ENCODE measurements at regions of chr14 and their contacts with region 1.

Region 1: DNA sequence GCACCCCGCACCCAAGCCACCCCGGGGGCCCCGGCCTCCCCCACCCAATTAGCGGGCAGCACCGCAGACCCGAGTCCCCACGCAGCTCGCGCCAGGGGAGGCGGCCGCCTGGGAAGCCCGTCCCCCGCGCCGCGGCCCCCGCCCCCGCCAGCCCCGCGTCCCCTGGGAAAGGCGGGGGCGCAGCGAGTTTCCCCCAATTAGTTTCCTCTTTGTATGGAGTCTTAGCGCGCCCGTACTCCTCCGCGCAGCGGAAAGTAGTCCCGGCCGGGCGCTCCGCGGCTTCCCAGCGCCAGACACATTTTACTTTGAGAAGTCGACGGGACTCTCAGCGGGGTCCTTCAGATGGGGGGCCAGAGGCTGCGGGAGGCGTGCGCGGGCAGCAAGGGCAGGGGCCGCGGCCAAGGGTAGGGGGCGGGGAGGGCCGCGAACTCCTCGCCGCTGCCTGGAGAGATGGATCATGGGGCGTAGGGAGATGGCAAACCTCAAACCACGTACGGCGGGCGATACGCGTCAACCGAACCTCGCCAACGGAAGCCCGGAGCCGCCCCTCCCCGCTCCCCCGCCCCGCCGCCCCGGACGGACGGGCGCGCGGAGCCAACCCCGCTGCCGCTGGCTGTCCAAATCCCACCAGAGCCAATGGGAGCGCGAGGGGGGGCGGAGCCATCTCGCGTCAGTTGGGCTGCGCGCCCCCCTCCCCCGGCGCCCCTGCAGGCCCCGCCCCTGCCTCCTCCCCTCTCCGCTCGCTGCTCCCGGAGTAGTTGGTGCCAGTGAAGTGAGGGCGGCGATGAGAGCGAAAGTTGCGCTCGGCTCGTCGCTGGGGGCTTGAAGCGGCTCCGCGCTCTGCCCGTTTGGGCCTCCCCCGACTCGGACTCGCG is at the start of gene RCOR1:
- DNase-seq: peak; percentile 99
- ATAC-seq: peak; percentile 92
- H3K4me3 Mint-ChIP-seq: peak within 1 kb of the TSS; percentile 93
- H3K27ac Mint-ChIP-seq: peak within 1 kb of the TSS; percentile 92
- H3K4me1 Mint-ChIP-seq: peaks cover 33% of the 10 kb centered on the region
- H3K27me3 Mint-ChIP-seq: no peaks in the 10 kb centered on the region
- total RNA-seq, gene RCOR1: 14.8 to 15.3 TPM

Region 2: DNA sequence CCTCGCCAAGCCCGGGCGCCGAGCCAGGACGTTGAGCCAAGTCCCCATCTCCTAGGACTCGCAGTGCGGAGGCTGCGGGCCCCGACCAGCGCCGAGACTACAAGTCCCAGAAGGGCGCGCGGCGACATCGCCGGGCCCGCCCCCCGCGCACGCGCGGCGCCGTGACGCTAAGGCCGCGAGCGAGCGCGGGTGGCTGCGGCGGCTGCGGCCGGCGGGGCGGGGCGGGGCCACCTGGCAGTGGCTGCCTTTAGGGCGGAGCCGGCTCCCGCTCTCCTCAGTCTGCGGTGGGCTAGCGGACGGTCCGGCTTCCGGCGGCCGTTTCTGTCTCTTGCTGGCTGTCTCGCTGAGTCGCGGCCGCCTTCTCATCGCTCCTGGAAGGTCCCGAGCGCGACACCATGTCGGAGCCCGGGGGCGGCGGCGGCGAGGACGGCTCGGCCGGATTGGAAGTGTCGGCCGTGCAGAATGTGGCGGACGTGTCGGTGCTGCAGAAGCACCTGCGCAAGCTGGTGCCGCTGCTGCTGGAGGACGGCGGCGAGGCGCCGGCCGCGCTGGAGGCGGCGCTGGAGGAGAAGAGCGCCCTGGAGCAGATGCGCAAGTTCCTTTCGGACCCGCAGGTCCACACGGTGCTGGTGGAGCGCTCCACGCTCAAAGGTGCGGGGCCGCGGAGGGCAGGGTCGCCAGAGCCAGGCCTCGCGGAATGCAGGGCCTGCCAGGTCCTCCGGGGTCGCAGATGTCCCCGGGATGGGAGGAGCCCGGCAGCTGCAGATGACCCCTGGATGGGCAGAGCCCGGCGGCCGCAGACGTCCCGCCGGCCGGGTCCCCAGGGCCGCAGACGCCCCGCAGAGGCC is 627.6 kb before region 1 on chr14 and contains the start of gene DYNC1H1:
- CTCF ChIA-PET with region 1: no interaction called
- POLR2A ChIA-PET with region 1: no interaction called
- intact Hi-C with region 1: loop called in 1 of 2 experiments (anchors 1 kb)
- DNase-seq: peak; percentile 93
- ATAC-seq: peak; percentile 82
- H3K4me3 Mint-ChIP-seq: peak within 1 kb of the TSS; percentile 89
- H3K27ac Mint-ChIP-seq: peak within 1 kb of the TSS; percentile 91
- H3K4me1 Mint-ChIP-seq: peaks cover 39% of the 10 kb centered on the region
- H3K27me3 Mint-ChIP-seq: no peaks in the 10 kb centered on the region
- total RNA-seq, gene DYNC1H1: 283 to 293 TPM

Region 3: GRCh38 chr14:102362545-102363181 is 229.5 kb before region 1 on chr14 and contains the starts of genes CINP and TECPR2:
- CTCF ChIA-PET with region 1: interaction called, 3 read pairs
- POLR2A ChIA-PET with region 1: interaction called, 4 read pairs
- intact Hi-C with region 1: loop called in 1 of 2 experiments (anchors 2 kb)
- DNase-seq: peak; percentile 99
- ATAC-seq: peak; percentile 78
- H3K4me3 Mint-ChIP-seq: no peak within 1 kb of the TSS
- H3K27ac Mint-ChIP-seq: peak within 1 kb of the TSS; percentile 96
- H3K4me1 Mint-ChIP-seq: peaks cover 36% of the 10 kb centered on the region
- H3K27me3 Mint-ChIP-seq: no peaks in the 10 kb centered on the region
- total RNA-seq, gene CINP: 47.0 to 51.4 TPM
- total RNA-seq, gene TECPR2: 5.6 to 6.9 TPM

Region 4: GRCh38 chr14:102608064-102608446 is 15.9 kb after region 1 on chr14:
- CTCF ChIA-PET with region 1: interaction called, 25 read pairs
- POLR2A ChIA-PET with region 1: interaction called, 3 read pairs
- intact Hi-C with region 1: loop called (anchors 1 kb)
- DNase-seq: no peak
- ATAC-seq: peak; percentile 73
- H3K4me3 Mint-ChIP-seq: no peak overlapping the region
- H3K27ac Mint-ChIP-seq: no peak overlapping the region
- H3K4me1 Mint-ChIP-seq: peaks cover 40% of the 10 kb centered on the region
- H3K27me3 Mint-ChIP-seq: no peaks in the 10 kb centered on the region

Region 5: GRCh38 chr14:102738756-102739494 is 146.8 kb after region 1 on chr14:
- CTCF ChIA-PET with region 1: no interaction called
- POLR2A ChIA-PET with region 1: no interaction called
- intact Hi-C with region 1: no loop called
- DNase-seq: no peak
- ATAC-seq: no peak
- H3K4me3 Mint-ChIP-seq: no peak overlapping the region
- H3K27ac Mint-ChIP-seq: no peak overlapping the region
- H3K4me1 Mint-ChIP-seq: no peaks in the 10 kb centered on the region
- H3K27me3 Mint-ChIP-seq: no peaks in the 10 kb centered on the region

Region 6: DNA sequence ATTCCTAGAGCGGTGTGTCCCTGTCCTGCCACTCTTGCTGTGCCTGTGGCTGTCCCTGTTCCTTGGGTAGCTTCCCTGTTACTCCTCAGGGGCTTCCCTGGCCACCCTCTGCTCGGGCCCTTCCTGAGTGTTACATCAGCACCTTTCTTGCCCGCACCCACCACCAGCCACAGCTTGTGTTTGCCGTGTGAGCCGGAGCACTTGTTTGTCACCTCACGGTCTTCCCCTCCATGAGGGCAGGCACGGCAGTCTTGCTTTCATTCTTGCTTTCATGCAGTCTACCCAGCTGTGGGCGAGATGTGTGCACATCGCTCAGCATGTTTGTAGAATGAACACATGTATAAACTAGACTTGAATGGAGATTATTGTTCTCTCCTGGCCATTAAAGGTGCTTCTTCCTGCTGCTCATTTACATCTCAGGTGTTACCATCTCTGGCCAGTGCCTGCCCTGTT is 227.1 kb after region 1 on chr14:
- CTCF ChIA-PET with region 1: no interaction called
- POLR2A ChIA-PET with region 1: no interaction called
- intact Hi-C with region 1: loop called in 1 of 2 experiments (anchors 1 kb)
- DNase-seq: peak; percentile 91
- ATAC-seq: peak; percentile 74
- H3K4me3 Mint-ChIP-seq: peak overlapping the region; percentile 61
- H3K27ac Mint-ChIP-seq: peak overlapping the region; percentile 94
- H3K4me1 Mint-ChIP-seq: peaks cover 87% of the 10 kb centered on the region
- H3K27me3 Mint-ChIP-seq: no peaks in the 10 kb centered on the region

Region 7: DNA sequence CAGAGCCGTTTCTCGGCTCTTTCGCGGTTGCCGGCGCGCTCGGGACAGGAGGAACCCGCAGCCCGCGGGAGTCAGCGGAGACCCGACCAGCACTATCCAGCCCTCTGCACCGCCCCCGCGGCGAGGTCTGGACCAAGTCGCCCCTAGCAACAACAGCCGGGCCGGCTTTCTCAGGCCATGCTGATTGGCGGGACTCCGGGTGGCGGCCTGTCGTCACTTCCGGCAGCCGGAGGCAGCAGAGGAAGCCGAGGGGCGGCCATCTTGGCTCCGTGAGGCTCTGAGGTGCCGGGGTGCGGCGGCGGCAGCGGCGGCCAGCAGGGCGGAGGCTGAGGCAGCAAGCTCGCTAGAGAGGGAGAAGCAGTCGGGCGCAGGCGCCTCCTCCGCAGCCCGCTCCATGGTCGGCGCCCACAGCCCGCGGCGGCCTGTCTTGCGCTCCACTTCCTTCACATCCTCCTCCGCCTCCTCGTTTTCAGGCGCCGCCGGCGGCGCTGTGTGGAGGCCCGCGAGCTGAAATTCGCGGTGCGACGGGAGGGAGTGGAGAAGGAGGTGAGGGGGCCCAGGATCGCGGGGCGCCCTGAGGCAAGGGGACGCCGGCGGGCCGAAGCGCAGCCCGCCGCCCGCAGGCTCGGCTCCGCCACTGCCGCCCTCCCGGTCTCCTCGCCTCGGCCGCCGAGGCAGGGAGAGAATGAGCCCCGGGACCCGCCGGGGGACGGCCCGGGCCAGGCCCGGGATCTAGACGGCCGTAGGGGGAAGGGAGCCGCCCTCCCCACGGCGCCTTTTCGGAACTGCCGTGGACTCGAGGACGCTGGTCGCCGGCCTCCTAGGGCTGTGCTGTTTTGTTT is 793.2 kb after region 1 on chr14 and contains the start of gene MARK3:
- CTCF ChIA-PET with region 1: no interaction called
- POLR2A ChIA-PET with region 1: no interaction called
- intact Hi-C with region 1: loop called in 1 of 2 experiments (anchors 1 kb)
- DNase-seq: peak; percentile 98
- ATAC-seq: peak; percentile 93
- H3K4me3 Mint-ChIP-seq: peak within 1 kb of the TSS; percentile 99
- H3K27ac Mint-ChIP-seq: peak within 1 kb of the TSS; percentile 98
- H3K4me1 Mint-ChIP-seq: peaks cover 33% of the 10 kb centered on the region
- H3K27me3 Mint-ChIP-seq: no peaks in the 10 kb centered on the region
- total RNA-seq, gene MARK3: 57.3 to 64.9 TPM

Measured in activated CD4-positive, alpha-beta T cell treated with anti-CD3 and anti-CD28 coated beads for 36 hours (primary cell).